ENCODE measurements at regions of chr10 and their contacts with region 1.

Region 1: DNA sequence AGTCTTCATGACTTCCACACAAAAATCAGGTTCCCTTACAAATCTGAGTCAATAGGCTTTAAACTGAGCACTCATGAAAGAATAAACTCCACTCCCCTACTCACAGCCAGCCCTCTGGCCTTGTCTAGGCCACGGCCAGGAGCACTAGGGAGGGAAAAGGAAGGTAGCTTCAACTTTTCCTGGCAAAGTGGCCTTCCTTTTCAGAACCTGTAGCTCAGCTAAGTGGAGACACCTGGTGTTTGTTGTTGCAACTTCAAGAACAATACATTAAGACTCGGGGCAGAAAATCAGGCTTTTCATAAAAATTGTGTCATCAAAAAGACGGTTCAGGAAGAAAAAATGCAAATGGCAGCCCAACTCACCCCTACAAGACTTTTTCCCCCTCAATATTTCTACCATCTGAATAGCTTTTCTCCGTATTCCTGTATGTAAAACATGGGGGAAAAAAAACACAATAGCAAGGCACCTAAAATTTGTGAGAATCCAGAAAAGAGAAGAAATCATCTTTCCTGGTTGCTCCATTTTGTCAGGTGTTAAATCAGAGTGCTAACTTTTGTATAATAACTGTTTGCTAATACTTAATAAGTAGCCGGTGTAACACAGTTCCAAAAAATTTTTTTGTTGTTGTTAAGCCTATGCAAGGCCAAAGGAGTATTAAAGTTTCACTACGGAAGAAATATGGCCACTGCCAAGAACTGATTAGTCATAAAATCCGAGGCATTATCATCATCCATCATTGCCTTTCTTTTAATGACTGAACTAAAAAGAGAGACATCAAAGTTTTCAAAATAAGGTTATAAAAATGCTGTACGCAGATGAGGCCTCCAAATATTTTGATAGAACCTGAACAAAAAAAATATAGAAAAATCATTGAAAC is 66.2 kb upstream of the ARID5B start:
- DNase-seq: no peak
- H3K4me3 ChIP-seq: no peak overlapping the region
- H3K27ac ChIP-seq: peak overlapping the region; percentile 70
- H3K4me1 ChIP-seq: peaks cover 69% of the 10 kb centered on the region
- H3K27me3 ChIP-seq: no peaks in the 10 kb centered on the region
- CTCF ChIP-seq: peak; percentile 59; the same call in 1 of the 2 replicates

Region 2: DNA sequence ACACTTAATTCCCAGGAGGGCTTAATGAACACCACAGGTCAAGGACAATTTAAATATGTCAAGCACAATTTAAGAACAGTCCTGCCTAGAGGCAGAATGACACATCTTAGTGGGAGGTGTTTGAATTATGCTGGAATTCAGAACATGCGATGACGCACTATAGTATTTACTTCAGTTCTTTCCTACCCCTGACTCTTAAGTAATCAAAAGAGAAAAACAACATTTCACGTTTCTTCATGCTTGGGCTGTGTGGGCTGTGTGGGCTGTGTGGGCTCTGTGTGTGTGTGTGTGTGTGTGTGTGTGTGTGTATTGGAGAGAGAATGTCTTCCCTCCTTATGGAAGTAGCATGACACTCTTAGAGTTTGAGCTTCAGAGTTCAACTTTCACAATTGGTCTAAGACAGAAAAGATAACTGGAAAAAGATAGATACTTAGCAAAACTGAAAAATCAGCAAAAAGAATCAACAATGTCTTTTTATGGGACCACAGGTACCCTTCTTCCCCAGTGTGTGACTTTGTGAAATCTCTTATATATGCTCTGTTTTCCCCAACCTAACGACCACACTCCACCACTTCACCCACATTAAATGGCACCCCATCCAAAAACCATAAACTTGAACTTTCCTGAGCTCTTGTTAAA is 206.3 kb before region 1 on chr10:
- CTCF ChIA-PET with region 1: no interaction called
- POLR2A ChIA-PET with region 1: no interaction called
- intact Hi-C with region 1: loop called (anchors 10 kb)
- DNase-seq: peak; percentile 27 to 92
- H3K4me3 ChIP-seq: no peak overlapping the region
- H3K27ac ChIP-seq: 0 out of 2 replicates have a peak overlapping the region, but pooled peaks have one; percentile 35
- H3K4me1 ChIP-seq: peaks cover 42% of the 10 kb centered on the region
- H3K27me3 ChIP-seq: no peaks in the 10 kb centered on the region
- CTCF ChIP-seq: no peak

Region 3: GRCh38 chr10:61733358-61733940 is 101.9 kb before region 1 on chr10:
- CTCF ChIA-PET with region 1: interaction called, 3 read pairs
- POLR2A ChIA-PET with region 1: no interaction called
- intact Hi-C with region 1: loop called (anchors 1 kb)
- DNase-seq: peak in 1 of 2 experiments; percentile 9
- H3K4me3 ChIP-seq: no peak overlapping the region
- H3K27ac ChIP-seq: no peak overlapping the region
- H3K4me1 ChIP-seq: no peaks in the 10 kb centered on the region
- H3K27me3 ChIP-seq: no peaks in the 10 kb centered on the region
- CTCF ChIP-seq: peak; percentile 79

Region 4: GRCh38 chr10:61750929-61751471 is 84.3 kb before region 1 on chr10:
- CTCF ChIA-PET with region 1: interaction called, 27 read pairs
- POLR2A ChIA-PET with region 1: no interaction called
- intact Hi-C with region 1: loop called (anchors 1 kb)
- DNase-seq: peak in 1 of 2 experiments; percentile 57
- H3K4me3 ChIP-seq: no peak overlapping the region
- H3K27ac ChIP-seq: no peak overlapping the region
- H3K4me1 ChIP-seq: peaks cover 17% of the 10 kb centered on the region
- H3K27me3 ChIP-seq: no peaks in the 10 kb centered on the region
- CTCF ChIP-seq: peak; percentile 55

Region 5: DNA sequence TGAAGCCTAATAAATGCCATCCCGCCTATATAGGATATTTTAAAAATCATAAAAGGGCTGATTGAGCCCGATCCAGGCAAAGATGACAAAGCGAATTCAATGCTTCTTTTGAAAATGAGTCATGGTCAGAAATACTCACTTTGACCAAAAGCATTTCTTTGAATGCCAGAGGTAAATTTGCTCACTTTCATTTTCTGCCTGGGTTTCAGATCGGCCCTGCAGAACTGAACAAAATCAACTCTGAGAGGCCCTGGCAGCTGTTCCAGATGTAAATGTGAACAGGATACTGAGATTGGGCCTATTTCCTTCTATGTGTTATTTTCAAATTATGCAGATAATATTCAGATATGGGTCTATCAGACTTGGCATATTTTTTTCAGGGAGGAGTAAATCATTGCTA is 48.6 kb before region 1 on chr10:
- CTCF ChIA-PET with region 1: no interaction called
- POLR2A ChIA-PET with region 1: no interaction called
- intact Hi-C with region 1: loop called (anchors 5 kb)
- DNase-seq: peak; percentile 11 to 56
- H3K4me3 ChIP-seq: peak overlapping the region; percentile 46; the same call in 1 of the 2 replicates
- H3K27ac ChIP-seq: peak overlapping the region; percentile 51
- H3K4me1 ChIP-seq: peaks cover 26% of the 10 kb centered on the region
- H3K27me3 ChIP-seq: no peaks in the 10 kb centered on the region
- CTCF ChIP-seq: no peak

Region 6: DNA sequence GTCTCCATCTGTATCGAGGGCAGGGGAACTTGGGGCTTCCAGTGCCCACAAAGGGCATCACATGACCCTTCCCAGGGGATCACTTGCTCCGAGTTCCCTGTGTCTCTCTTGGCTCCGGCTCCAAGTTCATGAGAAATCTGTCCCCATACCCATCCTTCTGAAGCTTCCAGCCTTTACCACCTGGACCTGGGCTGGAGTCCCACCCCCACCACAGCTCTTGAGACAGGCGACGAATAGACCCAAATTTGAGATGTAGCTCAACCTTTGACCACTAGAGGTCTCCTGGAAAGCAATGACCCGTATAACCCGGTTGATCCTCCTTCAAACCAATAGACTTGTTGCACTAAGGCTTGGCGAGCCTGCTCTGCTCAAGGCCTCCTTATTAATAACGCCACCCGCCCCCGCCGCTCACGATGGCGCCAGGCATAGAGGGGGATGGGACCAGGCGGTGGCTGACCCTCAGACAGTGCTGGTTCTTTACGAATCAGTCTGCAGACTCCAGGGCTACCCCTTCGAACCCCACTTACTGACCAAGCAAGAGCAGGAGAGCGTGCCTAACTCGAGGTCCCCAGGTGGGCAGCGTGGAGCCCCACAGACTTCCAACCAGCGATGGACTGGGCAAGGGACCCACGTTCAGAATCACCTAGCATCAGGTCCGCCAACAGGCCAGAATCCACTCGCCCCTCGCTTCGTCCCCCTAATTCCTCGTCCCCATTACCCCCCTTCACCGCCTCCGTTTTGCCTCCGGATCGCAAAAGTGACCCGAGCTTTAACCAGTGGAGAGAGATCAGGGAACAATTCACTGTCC is 61.8 kb after region 1 on chr10:
- CTCF ChIA-PET with region 1: interaction called, 6 read pairs
- POLR2A ChIA-PET with region 1: interaction called, 6 read pairs
- intact Hi-C with region 1: loop called (anchors 1 kb)
- DNase-seq: no peak
- H3K4me3 ChIP-seq: no peak overlapping the region
- H3K27ac ChIP-seq: no peak overlapping the region
- H3K4me1 ChIP-seq: peaks cover 22% of the 10 kb centered on the region
- H3K27me3 ChIP-seq: no peaks in the 10 kb centered on the region
- CTCF ChIP-seq: peak; percentile 64

Region 7: GRCh38 chr10:61943674-61944410 is 108.5 kb after region 1 on chr10:
- CTCF ChIA-PET with region 1: no interaction called
- POLR2A ChIA-PET with region 1: interaction called, 6 read pairs
- intact Hi-C with region 1: loop called (anchors 2 kb)
- DNase-seq: peak; percentile 7 to 88
- H3K4me3 ChIP-seq: peak overlapping the region; percentile 37; the same call in 1 of the 2 replicates
- H3K27ac ChIP-seq: peak overlapping the region; percentile 83
- H3K4me1 ChIP-seq: peaks cover 53% of the 10 kb centered on the region
- H3K27me3 ChIP-seq: no peaks in the 10 kb centered on the region
- CTCF ChIP-seq: no peak